Heart right ventricle (tissue), 16 donors: ENCODE measurements at regions of chr19 and their contacts with region 1.

Region 1: GRCh38 chr19:45817010-45817724 is 2.1 kb upstream of the RSPH6A start:
- DNase-seq: peak; percentile 94
- ATAC-seq: peak; percentile 79 to 94 (median 90)
- H3K4me3 ChIP-seq: no peak overlapping the region
- H3K27ac ChIP-seq: peak overlapping the region in 2 of 10 donors; percentile 32 to 44
- H3K4me1 ChIP-seq: peaks cover 0 to 31% (median 22%) of the 10 kb centered on the region in 9 donors
- H3K27me3 ChIP-seq: peaks cover 0 to 36% (median 0%) of the 10 kb centered on the region in 7 donors
- CTCF ChIP-seq: peak; percentile 94 to 99 (median 98)

Region 2: DNA sequence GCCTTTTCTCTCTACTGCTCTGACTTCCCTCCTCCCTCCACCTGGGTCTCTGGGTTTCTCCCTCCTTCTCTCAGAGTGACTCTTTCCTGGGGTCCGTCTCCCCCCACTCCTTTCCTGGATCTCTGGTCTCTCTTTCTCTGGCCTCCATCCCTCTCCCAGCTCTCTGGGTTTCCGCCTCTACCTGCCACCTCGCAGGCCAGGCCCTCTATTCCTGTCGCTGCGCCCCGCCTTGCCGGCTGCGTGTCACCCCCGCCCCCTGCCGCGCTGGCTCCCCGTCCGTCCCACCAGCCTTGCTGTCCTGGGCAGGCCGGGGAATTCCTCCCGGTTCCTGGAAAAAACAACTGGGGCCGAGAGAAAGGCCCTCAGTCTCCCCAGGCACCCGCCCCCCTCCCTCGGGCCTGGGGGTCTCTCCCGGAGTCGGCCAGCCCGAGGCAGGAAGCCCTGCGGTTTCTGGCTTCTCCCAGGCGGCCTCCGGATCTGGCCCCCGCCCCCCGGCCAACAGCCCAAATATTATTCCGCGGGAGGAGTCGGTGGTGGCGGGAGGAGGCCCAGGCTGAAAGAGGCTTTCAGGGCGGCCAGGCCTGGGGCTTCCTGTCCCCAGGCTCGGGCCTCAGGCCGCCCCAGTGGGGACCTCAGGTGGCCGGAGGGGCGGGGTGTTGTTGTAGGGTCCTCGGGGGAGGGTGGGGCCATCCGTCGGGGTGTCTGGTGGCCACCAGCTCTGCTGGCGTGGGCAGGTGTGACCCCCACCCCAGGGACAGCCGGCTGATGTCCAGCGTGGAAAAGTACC is 59.4 kb after region 1 on chr19:
- intact Hi-C with region 1: loop called in 2 of 10 experiments (anchors 5 to 10 kb)
- DNase-seq: peak; percentile 41 to 55
- ATAC-seq: peak; percentile 19 to 80 (median 64)
- H3K4me3 ChIP-seq: peak overlapping the region; percentile 4 to 47 (median 34)
- H3K27ac ChIP-seq: peak overlapping the region in 9 of 10 donors; percentile 28 to 86 (median 76)
- H3K4me1 ChIP-seq: peaks cover 5 to 16% (median 12%) of the 10 kb centered on the region in 9 donors
- H3K27me3 ChIP-seq: peaks cover 0 to 34% (median 0%) of the 10 kb centered on the region in 7 donors
- CTCF ChIP-seq: no peak

Region 3: GRCh38 chr19:46016426-46017094 is 199.4 kb after region 1 on chr19:
- intact Hi-C with region 1: loop called in 2 of 10 experiments (anchors 5 to 10 kb)
- DNase-seq: peak; percentile 80 to 84
- ATAC-seq: peak; percentile 78 to 92 (median 89)
- H3K4me3 ChIP-seq: peak overlapping the region; percentile 45 to 81 (median 74)
- H3K27ac ChIP-seq: peak overlapping the region in 3 of 10 donors; percentile 42 to 65 (median 44)
- H3K4me1 ChIP-seq: peaks cover 3 to 24% (median 21%) of the 10 kb centered on the region in 9 donors
- H3K27me3 ChIP-seq: peaks cover 0 to 44% (median 28%) of the 10 kb centered on the region in 7 donors
- CTCF ChIP-seq: peak; percentile 84 to 97 (median 92)